Activated CD8-positive, alpha-beta T cell treated with anti-CD3 and anti-CD28 coated beads for 36 hours (primary cell): ENCODE measurements at regions of chr14 and their contacts with region 1.

Region 1: GRCh38 chr14:22872033-22872832 is 693 bp downstream of the LRP10 start:
- DNase-seq: peak; percentile 78
- ATAC-seq: peak; percentile 22
- H3K4me3 Mint-ChIP-seq: peak overlapping the region; percentile 93
- H3K27ac Mint-ChIP-seq: peak overlapping the region; percentile 79
- H3K4me1 Mint-ChIP-seq: peaks cover 25% of the 10 kb centered on the region
- H3K27me3 Mint-ChIP-seq: no peaks in the 10 kb centered on the region
- CTCF ChIP-seq: peak; percentile 91

Region 2: GRCh38 chr14:22798528-22798927 is 73.7 kb before region 1 on chr14:
- CTCF ChIA-PET with region 1: no interaction called
- POLR2A ChIA-PET with region 1: no interaction called
- intact Hi-C with region 1: no loop called
- DNase-seq: no peak
- ATAC-seq: no peak
- H3K4me3 Mint-ChIP-seq: no peak overlapping the region
- H3K27ac Mint-ChIP-seq: no peak overlapping the region
- H3K4me1 Mint-ChIP-seq: no peaks in the 10 kb centered on the region
- H3K27me3 Mint-ChIP-seq: peaks cover 39% of the 10 kb centered on the region
- CTCF ChIP-seq: no peak

Region 3: DNA sequence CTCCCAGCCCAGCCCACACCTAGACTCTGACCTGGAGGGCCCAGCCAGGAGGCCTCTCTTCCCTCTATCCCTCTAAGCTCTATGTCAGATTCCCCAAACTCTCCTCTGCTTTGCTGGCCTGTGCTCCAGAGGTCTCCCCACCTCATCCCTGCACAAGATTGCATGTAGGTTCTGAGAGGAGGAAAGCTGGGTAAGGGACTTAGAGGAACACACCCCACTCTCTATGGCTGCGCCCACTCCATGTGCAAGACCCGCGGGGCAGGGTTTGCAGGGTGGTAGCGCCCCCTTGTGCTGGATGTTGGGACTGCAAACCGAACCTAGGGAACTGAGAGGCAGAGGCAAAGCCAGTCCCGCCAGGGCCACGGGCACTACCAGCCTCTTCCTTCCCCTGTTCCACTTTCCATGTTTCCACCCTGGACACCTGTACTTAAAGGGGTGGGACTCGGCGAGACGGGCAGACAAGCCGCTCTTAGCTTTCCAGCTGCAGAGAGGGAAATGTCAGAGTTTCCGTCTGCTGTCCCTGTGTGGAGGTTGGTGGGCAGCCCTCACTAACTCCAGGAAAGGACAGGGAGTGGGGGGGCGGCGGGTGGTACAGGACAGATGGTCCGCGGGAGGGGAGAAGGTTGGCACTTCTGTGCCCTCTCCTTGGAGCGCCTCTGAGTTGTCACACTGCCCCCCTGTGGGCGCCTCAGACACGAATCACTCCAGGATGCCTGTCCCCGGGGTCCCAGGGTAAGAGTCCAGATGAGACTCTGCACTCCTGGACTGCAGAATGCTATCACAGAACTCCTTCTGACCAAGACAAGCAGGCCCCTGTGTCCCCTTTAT is 19.1 kb before region 1 on chr14:
- CTCF ChIA-PET with region 1: interaction called, 71 read pairs
- POLR2A ChIA-PET with region 1: interaction called, 10 read pairs
- intact Hi-C with region 1: no loop called
- DNase-seq: peak; percentile 96
- ATAC-seq: peak; percentile 82
- H3K4me3 Mint-ChIP-seq: peak overlapping the region; percentile 71
- H3K27ac Mint-ChIP-seq: peak overlapping the region; percentile 79
- H3K4me1 Mint-ChIP-seq: peaks cover 15% of the 10 kb centered on the region
- H3K27me3 Mint-ChIP-seq: peaks cover 13% of the 10 kb centered on the region
- CTCF ChIP-seq: peak; percentile 92

Region 4: GRCh38 chr14:22900081-22900799 is 28.0 kb after region 1 on chr14:
- CTCF ChIA-PET with region 1: interaction called, 76 read pairs
- POLR2A ChIA-PET with region 1: interaction called, 5 read pairs
- intact Hi-C with region 1: no loop called
- DNase-seq: peak; percentile 66
- ATAC-seq: peak; percentile 82
- H3K4me3 Mint-ChIP-seq: no peak overlapping the region
- H3K27ac Mint-ChIP-seq: no peak overlapping the region
- H3K4me1 Mint-ChIP-seq: peaks cover 13% of the 10 kb centered on the region
- H3K27me3 Mint-ChIP-seq: no peaks in the 10 kb centered on the region
- CTCF ChIP-seq: peak; percentile 60

Region 5: GRCh38 chr14:22918804-22919600 is 46.8 kb after region 1 on chr14 and contains the start of gene RBM23:
- CTCF ChIA-PET with region 1: interaction called, 14 read pairs
- POLR2A ChIA-PET with region 1: interaction called, 16 read pairs
- intact Hi-C with region 1: loop called (anchors 5 kb)
- DNase-seq: peak; percentile 100
- ATAC-seq: peak; percentile 95
- H3K4me3 Mint-ChIP-seq: peak within 1 kb of the TSS; percentile 89
- H3K27ac Mint-ChIP-seq: peak within 1 kb of the TSS; percentile 98
- H3K4me1 Mint-ChIP-seq: peaks cover 36% of the 10 kb centered on the region
- H3K27me3 Mint-ChIP-seq: no peaks in the 10 kb centered on the region
- CTCF ChIP-seq: no peak
- total RNA-seq, gene RBM23: 46.9 to 55.2 TPM

Region 6: DNA sequence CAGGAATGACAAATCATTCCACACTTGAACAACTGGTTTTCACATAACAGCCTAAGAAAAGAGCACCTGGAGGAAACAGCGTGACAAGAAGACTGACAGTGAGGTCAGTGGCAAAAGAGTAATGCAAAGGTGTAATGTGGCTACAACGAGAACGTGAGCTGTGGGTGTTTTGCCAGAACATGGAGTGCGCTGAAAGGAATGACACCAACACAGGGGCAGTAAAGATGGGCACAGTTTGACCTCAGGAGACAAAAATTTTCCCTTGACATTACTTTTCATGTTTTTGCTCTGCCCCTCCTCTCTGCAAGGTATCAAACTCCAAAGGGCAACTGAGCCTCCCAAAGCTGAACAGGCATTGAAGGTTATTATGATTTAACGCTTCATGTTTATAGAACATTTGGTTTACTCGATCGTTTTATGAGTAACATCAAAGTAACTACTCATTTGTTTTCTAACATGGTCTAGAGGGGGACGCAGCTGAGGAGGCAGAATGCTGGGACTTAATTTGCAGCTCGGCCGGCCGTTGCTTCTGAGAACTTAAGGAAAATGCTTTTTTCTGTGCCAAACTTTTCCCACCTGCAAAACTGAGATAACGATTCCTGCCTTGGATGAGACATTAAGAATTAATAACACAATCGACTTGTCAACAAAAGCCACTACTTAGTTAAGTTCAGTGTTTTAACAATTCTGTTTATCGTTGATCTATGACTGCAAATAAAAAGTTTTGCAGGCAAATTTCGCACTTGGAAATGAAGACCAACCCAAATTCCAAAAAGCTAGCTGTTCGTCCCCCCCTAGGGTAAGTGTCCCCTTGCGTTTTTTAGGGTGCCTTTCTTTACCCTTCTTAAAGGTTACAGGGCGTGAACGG is 83.7 kb after region 1 on chr14:
- CTCF ChIA-PET with region 1: interaction called, 14 read pairs
- POLR2A ChIA-PET with region 1: interaction called, 4 read pairs
- intact Hi-C with region 1: no loop called
- DNase-seq: no peak
- ATAC-seq: no peak
- H3K4me3 Mint-ChIP-seq: peak overlapping the region; percentile 93
- H3K27ac Mint-ChIP-seq: peak overlapping the region; percentile 93
- H3K4me1 Mint-ChIP-seq: peaks cover 25% of the 10 kb centered on the region
- H3K27me3 Mint-ChIP-seq: no peaks in the 10 kb centered on the region
- CTCF ChIP-seq: no peak